ENCODE measurements at regions of chr2 and their contacts with region 1.

Region 1: DNA sequence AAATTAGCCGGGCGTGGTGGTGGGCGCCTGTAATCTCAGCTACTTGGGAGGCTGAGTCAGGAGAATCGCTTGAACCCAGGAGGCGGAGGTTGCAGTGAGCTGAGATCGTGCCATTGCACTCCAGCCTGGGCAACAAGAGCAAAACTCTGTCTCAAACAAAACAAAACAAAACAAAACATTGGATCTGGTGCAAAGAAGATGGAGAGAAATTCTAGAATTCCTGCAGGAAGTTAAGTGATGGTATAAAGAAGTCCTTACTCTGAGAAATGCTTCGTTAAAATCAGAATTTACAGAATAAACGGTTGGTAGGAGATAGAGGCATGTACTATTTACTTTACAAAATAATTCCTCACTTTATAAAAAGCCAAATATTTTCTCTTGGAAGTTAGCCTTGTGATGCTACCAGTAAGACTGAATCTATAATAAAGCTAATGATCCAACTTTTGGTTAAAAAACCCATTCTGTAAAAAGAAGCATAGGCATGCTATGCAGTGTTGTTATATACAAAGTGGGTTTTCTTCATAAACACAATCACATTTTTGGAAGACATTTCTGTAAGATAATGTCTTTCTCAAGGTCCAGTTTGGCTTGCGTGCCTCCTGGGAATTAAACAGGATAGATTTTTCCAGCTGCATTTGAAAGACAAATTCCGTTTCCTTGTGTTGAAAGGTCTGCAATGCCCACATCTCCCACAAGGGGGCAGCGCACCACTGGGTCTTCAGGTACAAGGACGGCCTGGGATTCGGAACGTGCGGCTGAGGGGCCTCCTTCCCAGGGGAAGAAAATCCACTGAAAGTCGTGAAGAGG is 35.6 kb upstream of the PNO1 start:
- DNase-seq: peak; percentile 89
- ATAC-seq: peak; percentile 75
- H3K4me3 Mint-ChIP-seq: no peak overlapping the region
- H3K27ac Mint-ChIP-seq: no peak overlapping the region
- H3K4me1 Mint-ChIP-seq: peaks cover 2% of the 10 kb centered on the region
- H3K27me3 Mint-ChIP-seq: no peaks in the 10 kb centered on the region
- CTCF ChIP-seq: peak; percentile 97

Region 2: DNA sequence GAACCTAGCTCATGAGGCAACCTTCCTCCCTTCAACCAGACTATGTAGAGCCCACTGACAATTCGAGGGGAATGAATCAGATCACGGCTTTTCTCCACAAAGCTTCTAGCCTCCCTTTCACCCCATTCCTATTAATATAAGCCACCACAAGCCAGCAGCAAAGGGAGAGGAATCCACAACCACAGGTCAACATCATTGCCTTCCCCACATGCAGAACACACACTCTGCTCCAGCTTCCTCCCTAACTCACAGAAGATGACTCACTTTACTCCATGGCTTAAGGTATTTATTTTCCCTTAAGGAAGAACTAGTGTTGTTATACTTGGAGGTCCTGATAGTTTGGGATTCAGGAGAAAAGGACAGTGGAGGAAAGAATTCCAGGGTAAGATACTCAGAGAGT is 331.5 kb before region 1 on chr2:
- CTCF ChIA-PET with region 1: no interaction called
- POLR2A ChIA-PET with region 1: no interaction called
- intact Hi-C with region 1: no loop called
- DNase-seq: no peak
- ATAC-seq: no peak
- H3K4me3 Mint-ChIP-seq: no peak overlapping the region
- H3K27ac Mint-ChIP-seq: no peak overlapping the region
- H3K4me1 Mint-ChIP-seq: no peaks in the 10 kb centered on the region
- H3K27me3 Mint-ChIP-seq: peaks cover 1% of the 10 kb centered on the region
- CTCF ChIP-seq: no peak

Region 3: GRCh38 chr2:67974559-67975430 is 147.3 kb before region 1 on chr2:
- CTCF ChIA-PET with region 1: no interaction called
- POLR2A ChIA-PET with region 1: no interaction called
- intact Hi-C with region 1: no loop called
- DNase-seq: no peak
- ATAC-seq: no peak
- H3K4me3 Mint-ChIP-seq: no peak overlapping the region
- H3K27ac Mint-ChIP-seq: no peak overlapping the region
- H3K4me1 Mint-ChIP-seq: no peaks in the 10 kb centered on the region
- H3K27me3 Mint-ChIP-seq: peaks cover 19% of the 10 kb centered on the region
- CTCF ChIP-seq: no peak

Region 4: GRCh38 chr2:68110102-68110501 is 12.0 kb before region 1 on chr2:
- CTCF ChIA-PET with region 1: interaction called, 21 read pairs
- POLR2A ChIA-PET with region 1: no interaction called
- intact Hi-C with region 1: no loop called
- DNase-seq: no peak
- ATAC-seq: no peak
- H3K4me3 Mint-ChIP-seq: no peak overlapping the region
- H3K27ac Mint-ChIP-seq: no peak overlapping the region
- H3K4me1 Mint-ChIP-seq: no peaks in the 10 kb centered on the region
- H3K27me3 Mint-ChIP-seq: no peaks in the 10 kb centered on the region
- CTCF ChIP-seq: no peak

Region 5: DNA sequence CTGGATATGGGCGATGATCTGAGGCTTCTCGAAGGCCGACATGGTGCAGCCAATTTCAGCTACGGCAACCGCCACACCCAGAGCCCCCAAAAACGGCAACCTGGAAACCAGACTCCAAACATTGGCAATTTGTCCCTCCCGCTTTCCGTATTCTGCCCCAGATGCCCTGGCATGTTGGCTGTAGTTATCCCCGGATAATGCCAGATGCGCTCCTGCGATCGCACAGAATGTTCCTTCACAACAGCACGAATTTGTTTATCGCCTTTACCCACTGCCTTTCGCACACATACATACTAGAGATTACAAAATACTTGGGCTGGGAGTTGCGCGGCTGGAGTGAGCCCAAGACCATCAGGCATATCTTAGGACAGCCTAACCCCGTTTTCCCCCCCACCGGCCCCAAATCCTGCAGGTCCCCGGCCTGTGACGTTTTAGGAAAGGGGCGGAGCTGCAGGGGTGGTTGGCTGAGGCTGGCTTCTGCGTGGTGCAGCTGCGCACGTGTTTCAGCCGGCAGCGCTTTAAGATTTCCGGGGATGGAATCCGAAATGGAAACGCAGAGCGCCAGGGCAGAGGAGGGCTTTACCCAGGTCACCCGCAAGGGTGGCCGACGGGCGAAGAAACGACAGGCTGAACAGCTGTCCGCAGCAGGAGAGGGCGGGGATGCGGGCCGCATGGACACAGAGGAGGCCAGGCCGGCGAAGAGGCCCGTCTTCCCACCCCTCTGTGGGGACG is 35.5 kb after region 1 on chr2 and contains the start of gene PNO1:
- CTCF ChIA-PET with region 1: interaction called, 21 read pairs
- POLR2A ChIA-PET with region 1: no interaction called
- intact Hi-C with region 1: no loop called
- DNase-seq: peak; percentile 98
- ATAC-seq: peak; percentile 96
- H3K4me3 Mint-ChIP-seq: peak within 1 kb of the TSS; percentile 97
- H3K27ac Mint-ChIP-seq: peak within 1 kb of the TSS; percentile 100
- H3K4me1 Mint-ChIP-seq: peaks cover 46% of the 10 kb centered on the region
- H3K27me3 Mint-ChIP-seq: no peaks in the 10 kb centered on the region
- CTCF ChIP-seq: no peak
- total RNA-seq, gene PNO1: 25.1 to 26.2 TPM

Region 6: DNA sequence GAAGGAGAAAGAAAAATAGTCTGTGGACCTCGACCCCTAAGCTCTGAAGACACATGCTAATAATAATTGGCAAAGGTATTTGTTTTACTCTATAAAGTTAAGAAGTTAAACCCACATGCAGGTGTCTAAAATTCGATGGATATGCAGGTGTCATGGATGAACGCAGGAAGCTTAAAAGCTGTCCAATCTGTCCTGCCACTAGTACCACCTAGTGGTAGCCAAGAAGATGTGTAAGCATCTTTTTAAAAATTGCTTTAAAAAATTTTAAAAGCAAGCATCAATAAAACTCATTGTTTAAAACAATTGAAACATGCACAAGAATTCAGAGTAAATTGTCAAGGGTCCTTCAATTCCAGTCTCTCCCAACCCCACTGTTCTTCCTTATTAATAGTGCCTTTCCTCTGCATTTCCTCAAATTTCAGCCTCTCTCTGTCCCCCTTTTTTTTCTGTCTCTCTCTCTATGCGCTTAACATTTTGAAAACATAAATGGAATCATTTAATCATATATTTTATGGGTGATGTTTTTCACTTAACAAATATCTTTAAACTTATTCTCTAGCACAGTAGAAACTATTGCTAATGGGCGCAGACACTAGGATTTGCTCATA is 160.8 kb after region 1 on chr2:
- CTCF ChIA-PET with region 1: interaction called, 114 read pairs
- POLR2A ChIA-PET with region 1: interaction called, 4 read pairs
- intact Hi-C with region 1: loop called (anchors 2 kb)
- DNase-seq: peak; percentile 16
- ATAC-seq: peak; percentile 67
- H3K4me3 Mint-ChIP-seq: no peak overlapping the region
- H3K27ac Mint-ChIP-seq: no peak overlapping the region
- H3K4me1 Mint-ChIP-seq: no peaks in the 10 kb centered on the region
- H3K27me3 Mint-ChIP-seq: peaks cover 24% of the 10 kb centered on the region
- CTCF ChIP-seq: peak; percentile 80

Region 7: GRCh38 chr2:68423966-68424650 is 302.0 kb after region 1 on chr2:
- CTCF ChIA-PET with region 1: no interaction called
- POLR2A ChIA-PET with region 1: no interaction called
- intact Hi-C with region 1: loop called (anchors 10 kb)
- DNase-seq: peak; percentile 33
- ATAC-seq: peak; percentile 86
- H3K4me3 Mint-ChIP-seq: no peak overlapping the region
- H3K27ac Mint-ChIP-seq: no peak overlapping the region
- H3K4me1 Mint-ChIP-seq: peaks cover 19% of the 10 kb centered on the region
- H3K27me3 Mint-ChIP-seq: no peaks in the 10 kb centered on the region
- CTCF ChIP-seq: no peak